ENCODE measurements at regions of chr21 and their contacts with region 1.

Region 1: GRCh38 chr21:16419188-16419921 is 689.6 kb downstream of the USP25 start:
- DNase-seq: peak; percentile 12 to 79
- H3K4me3 ChIP-seq: peak overlapping the region; percentile 47 to 52
- H3K27ac ChIP-seq: peak overlapping the region; percentile 49 to 61
- H3K4me1 ChIP-seq: no peaks in the 10 kb centered on the region
- H3K27me3 ChIP-seq: no peaks in the 10 kb centered on the region
- CTCF ChIP-seq: no peak

Region 2: DNA sequence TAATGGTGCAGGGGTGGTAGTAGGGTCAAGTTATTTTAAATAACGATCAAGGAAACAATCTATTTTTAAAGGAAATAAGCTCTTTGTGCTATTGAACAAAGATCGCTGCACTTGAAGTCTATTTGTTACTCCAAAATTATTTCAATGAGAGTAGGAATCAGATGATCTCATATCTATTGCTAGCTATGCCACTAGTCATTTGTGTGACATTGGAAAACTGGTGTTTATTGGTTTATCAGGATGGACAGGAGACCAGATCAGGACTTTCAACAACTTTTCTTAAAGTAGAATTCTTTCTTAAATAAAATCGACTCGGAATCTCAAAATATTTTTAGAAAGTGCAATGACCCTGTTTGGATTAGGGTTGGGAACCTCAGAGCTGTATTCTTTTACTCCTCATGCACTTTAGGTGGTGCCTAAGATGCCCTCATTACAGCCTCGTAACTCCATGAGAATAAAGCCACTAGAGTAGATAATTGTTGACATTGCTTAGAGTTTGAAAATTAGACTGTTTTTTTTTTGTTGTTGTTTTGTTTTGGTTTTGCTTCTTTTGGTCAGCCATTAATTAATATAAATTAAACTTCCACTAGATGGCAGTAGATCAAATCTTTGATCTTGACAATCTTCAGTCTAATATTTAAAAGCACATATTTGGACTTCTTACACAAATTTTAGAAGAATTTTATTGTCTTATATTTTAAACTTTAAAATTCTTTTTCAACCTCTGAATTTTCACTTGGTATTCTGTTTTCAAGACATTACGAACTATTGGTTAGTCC is 337.1 kb before region 1 on chr21:
- intact Hi-C with region 1: loop called (anchors 10 kb)
- DNase-seq: no peak
- H3K4me3 ChIP-seq: peak overlapping the region in 1 of 2 donors; percentile 24
- H3K27ac ChIP-seq: no peak overlapping the region
- H3K4me1 ChIP-seq: no peaks in the 10 kb centered on the region
- H3K27me3 ChIP-seq: no peaks in the 10 kb centered on the region
- CTCF ChIP-seq: peak; percentile 12 to 44 (median 14)

Region 3: GRCh38 chr21:16363518-16363917 is 55.8 kb before region 1 on chr21:
- intact Hi-C with region 1: no loop called
- DNase-seq: no peak
- H3K4me3 ChIP-seq: no peak overlapping the region
- H3K27ac ChIP-seq: no peak overlapping the region
- H3K4me1 ChIP-seq: no peaks in the 10 kb centered on the region
- H3K27me3 ChIP-seq: no peaks in the 10 kb centered on the region
- CTCF ChIP-seq: no peak

Region 4: DNA sequence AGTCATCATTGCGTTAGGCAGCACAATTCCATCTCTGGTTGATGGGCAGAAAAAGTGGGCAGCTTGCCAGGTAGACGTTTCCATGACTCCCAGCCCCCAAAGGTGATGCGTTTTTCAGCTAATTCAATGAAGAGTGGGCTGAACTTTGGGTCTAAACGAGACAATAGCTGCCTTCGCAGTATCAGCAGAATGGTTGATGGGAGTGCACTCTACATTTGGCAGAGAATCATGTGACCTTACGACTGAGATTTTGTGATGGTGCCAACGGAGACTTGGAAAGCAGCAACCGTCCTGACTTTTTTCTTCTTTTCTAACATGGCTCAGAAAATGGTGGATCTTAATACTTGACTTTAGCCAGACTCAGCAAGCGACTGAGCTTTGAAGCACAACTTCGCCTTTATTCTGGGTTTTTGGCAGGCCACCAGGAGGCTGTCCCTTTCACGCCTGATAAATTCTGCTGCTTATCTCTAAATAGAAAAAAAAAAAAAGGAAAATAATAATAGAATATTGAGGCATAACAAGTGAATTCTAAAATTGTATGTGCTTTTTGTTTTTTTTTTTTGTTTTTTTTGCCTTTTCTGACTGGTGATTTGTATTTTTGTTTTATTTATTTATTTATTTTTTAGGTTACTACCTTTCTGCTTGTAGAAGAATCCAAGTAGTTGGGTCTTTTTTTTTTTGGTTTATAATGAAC is 115.2 kb after region 1 on chr21:
- intact Hi-C with region 1: loop called (anchors 5 kb)
- DNase-seq: peak in 1 of 2 donors; percentile 77
- H3K4me3 ChIP-seq: peak overlapping the region; percentile 46 to 62
- H3K27ac ChIP-seq: peak overlapping the region; percentile 84 to 85
- H3K4me1 ChIP-seq: no peaks in the 10 kb centered on the region
- H3K27me3 ChIP-seq: no peaks in the 10 kb centered on the region
- CTCF ChIP-seq: no peak

Region 5: GRCh38 chr21:16588433-16588860 is 169.1 kb after region 1 on chr21:
- intact Hi-C with region 1: loop called (anchors 5 kb)
- DNase-seq: peak; percentile 20 to 81
- H3K4me3 ChIP-seq: peak overlapping the region; percentile 51 to 68
- H3K27ac ChIP-seq: peak overlapping the region; percentile 69 to 73
- H3K4me1 ChIP-seq: peaks cover 0 to 8% of the 10 kb centered on the region in 2 donors
- H3K27me3 ChIP-seq: no peaks in the 10 kb centered on the region
- CTCF ChIP-seq: no peak